ENCODE measurements at regions of chr2 and their contacts with region 1.

Region 1: GRCh38 chr2:216023055-216023648 is 9.8 kb upstream of the MREG start:
- DNase-seq: peak; percentile 53 to 74 (median 65)
- H3K4me3 ChIP-seq: no peak overlapping the region
- H3K27ac ChIP-seq: no peak overlapping the region
- H3K4me1 ChIP-seq: peaks cover 0 to 3% (median 0%) of the 10 kb centered on the region in 4 experiments
- H3K27me3 ChIP-seq: no peaks in the 10 kb centered on the region

Region 2: GRCh38 chr2:215961981-215962380 is 61.2 kb before region 1 on chr2:
- CTCF ChIA-PET with region 1: interaction called, 15 read pairs
- POLR2A ChIA-PET with region 1: no interaction called
- DNase-seq: no peak
- H3K4me3 ChIP-seq: no peak overlapping the region
- H3K27ac ChIP-seq: no peak overlapping the region
- H3K4me1 ChIP-seq: peaks cover 0 to 20% (median 7%) of the 10 kb centered on the region in 4 experiments
- H3K27me3 ChIP-seq: no peaks in the 10 kb centered on the region

Region 3: DNA sequence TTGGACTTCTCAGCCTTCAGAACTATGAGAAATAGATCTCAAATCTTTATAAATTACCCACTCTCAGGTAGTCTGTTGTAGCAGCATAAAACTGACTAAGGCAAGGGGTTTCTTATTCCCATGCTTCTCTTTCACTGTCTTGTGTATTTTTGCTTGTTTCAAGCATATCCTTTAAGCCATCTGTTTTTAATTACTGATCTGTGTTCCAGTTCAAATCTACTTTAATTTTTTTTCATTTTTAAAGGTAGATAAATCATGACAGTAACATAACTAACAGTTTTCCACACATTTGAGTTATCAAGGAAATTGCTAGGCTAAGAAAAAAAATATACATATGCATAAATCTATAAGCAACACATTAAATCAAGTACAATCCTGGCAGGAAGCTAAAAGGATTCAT is 1154.6 kb after region 1 on chr2:
- CTCF ChIA-PET with region 1: no interaction called
- POLR2A ChIA-PET with region 1: no interaction called
- DNase-seq: no peak
- H3K4me3 ChIP-seq: no peak overlapping the region
- H3K27ac ChIP-seq: no peak overlapping the region
- H3K4me1 ChIP-seq: no peaks in the 10 kb centered on the region
- H3K27me3 ChIP-seq: no peaks in the 10 kb centered on the region